ENCODE measurements at regions of chr9 and their contacts with region 1.

Region 1: DNA sequence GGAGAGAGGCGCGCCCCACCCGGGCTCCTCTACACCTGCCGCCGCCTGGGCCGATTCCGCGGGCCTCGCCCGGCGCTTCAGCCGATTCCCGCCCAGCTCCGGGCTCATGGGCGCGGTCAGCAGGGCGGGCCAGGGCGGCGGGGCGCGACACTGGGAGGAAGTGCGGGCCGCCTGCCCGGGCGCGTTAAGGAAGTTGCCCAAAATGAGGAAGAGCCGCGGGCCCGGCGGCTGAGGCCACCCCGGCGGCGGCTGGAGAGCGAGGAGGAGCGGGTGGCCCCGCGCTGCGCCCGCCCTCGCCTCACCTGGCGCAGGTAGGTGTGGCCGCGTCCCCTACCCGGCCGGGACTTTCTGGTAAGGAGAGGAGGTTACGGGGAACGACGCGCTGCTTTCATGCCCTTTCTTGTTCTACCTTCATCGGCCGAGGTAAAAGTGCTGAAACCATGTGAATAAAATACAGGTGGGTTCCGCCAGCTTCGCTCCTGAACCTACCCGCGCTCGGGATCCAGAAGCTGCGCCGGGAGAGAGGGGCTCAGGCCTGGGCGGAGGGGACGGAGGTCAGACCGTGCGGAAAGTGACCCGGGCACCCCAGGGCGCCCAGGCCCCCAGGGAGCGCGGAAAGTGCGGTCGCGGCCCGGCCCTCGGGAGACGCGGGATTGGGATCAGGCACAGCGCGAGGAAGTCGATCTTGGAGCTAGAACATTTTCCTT is at the start of gene SYK:
- DNase-seq: peak in 1 of 2 donors; percentile 45
- ATAC-seq: peak; percentile 66 to 82 (median 69)
- H3K4me3 ChIP-seq: peak within 1 kb of the TSS; percentile 98
- H3K4me3 Mint-ChIP-seq: peak within 1 kb of the TSS; percentile 98
- H3K27ac ChIP-seq: peak within 1 kb of the TSS; percentile 86
- H3K27ac Mint-ChIP-seq: peak within 1 kb of the TSS; percentile 93 to 97
- H3K4me1 ChIP-seq: peaks cover 9% of the 10 kb centered on the region
- H3K4me1 Mint-ChIP-seq: peaks cover 50 to 64% of the 10 kb centered on the region in 2 donors
- H3K27me3 ChIP-seq: no peaks in the 10 kb centered on the region
- H3K27me3 Mint-ChIP-seq: no peaks in the 10 kb centered on the region
- CTCF ChIP-seq: no peak
- total RNA-seq, gene SYK: 75.5 to 104 (median 78.0) TPM

Region 2: DNA sequence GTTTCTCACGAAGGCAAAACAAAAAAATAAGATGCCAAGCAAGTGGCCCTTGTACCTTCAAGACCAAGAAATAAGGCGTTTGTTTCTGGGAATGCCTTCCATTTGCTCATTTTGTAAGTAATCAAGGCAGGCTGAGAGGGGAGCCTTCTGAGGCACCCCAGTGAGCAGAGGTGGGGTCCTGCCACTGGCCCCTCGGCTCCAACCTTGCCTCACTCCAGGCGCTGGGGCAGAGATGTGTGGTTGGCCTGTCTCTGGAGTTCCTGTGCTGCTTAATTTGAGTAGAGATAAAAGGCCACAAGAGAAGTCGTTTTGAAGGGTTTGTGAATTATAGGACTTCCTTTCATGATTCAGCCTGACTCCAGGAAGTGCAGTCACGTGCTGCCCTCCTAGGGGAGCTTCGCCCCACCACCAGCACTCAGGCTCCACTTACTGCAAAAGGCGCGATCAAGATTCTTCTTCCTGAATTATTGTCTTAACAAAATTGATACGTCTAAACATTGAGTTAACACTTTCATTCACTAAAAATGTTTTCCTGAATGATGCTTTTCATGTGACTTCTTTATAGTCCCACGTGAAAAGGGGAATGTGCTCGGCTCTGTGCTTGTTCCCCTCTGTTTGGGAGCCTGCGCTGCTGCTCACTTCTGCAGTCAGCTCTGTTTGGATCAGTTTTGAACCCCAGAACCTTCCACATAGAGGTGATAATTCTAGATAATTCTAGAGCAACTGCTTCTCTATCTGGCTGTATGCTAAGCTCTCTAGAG is 13.6 kb after region 1 on chr9:
- intact Hi-C with region 1: loop called (anchors 1 kb)
- DNase-seq: peak; percentile 34 to 36
- ATAC-seq: peak; percentile 76 to 83 (median 80)
- H3K4me3 ChIP-seq: peak overlapping the region; percentile 4
- H3K4me3 Mint-ChIP-seq: peak overlapping the region; percentile 83
- H3K27ac ChIP-seq: peak overlapping the region; percentile 81
- H3K27ac Mint-ChIP-seq: peak overlapping the region; percentile 90 to 94
- H3K4me1 ChIP-seq: peaks cover 25% of the 10 kb centered on the region
- H3K4me1 Mint-ChIP-seq: peaks cover 67 to 77% of the 10 kb centered on the region in 2 donors
- H3K27me3 ChIP-seq: no peaks in the 10 kb centered on the region
- H3K27me3 Mint-ChIP-seq: no peaks in the 10 kb centered on the region
- CTCF ChIP-seq: no peak

Region 3: DNA sequence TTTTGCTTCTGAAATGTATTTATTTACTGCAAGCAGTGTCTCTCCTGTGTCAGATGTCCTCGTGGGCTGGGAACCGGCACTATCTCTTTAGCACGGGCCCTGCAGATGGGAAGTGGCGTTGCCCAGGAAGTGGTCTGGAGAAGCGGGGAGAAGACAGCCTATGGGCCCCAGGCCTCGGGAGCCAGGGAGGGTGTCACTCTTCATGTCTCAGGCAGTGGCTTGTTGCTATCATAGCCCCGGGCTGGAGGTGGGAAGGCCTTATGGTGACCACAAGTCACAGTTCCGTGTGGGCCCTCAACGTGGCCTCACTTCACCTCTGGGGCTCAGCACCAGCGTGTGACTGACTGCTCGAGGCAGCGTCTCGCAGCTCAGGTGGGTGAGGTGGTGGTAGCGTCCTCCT is 41.3 kb after region 1 on chr9:
- intact Hi-C with region 1: loop called (anchors 5 kb)
- DNase-seq: peak in 1 of 2 donors; percentile 52
- ATAC-seq: peak; percentile 73 to 91 (median 82)
- H3K4me3 ChIP-seq: no peak overlapping the region
- H3K4me3 Mint-ChIP-seq: no peak overlapping the region
- H3K27ac ChIP-seq: peak overlapping the region; percentile 38
- H3K27ac Mint-ChIP-seq: no peak overlapping the region
- H3K4me1 ChIP-seq: peaks cover 51% of the 10 kb centered on the region
- H3K4me1 Mint-ChIP-seq: peaks cover 17 to 28% of the 10 kb centered on the region in 2 donors
- H3K27me3 ChIP-seq: no peaks in the 10 kb centered on the region
- H3K27me3 Mint-ChIP-seq: no peaks in the 10 kb centered on the region
- CTCF ChIP-seq: no peak

Measured in natural killer cell (primary cell).